T-cell (primary cell): ENCODE measurements at regions of chr9 and their contacts with region 1.

Region 1: GRCh38 chr9:27333241-27334052 is 36.5 kb upstream of the EQTN start:
- DNase-seq: peak in 25 of 35 experiments; percentile 2 to 70 (median 16)
- ATAC-seq: peak in 3 of 4 experiments; percentile 41 to 66 (median 43)
- H3K4me3 ChIP-seq: no peak overlapping the region
- H3K4me3 Mint-ChIP-seq: no peak overlapping the region
- H3K27ac ChIP-seq: no peak overlapping the region
- H3K27ac Mint-ChIP-seq: no peak overlapping the region
- H3K4me1 ChIP-seq: no peaks in the 10 kb centered on the region
- H3K4me1 Mint-ChIP-seq: no peaks in the 10 kb centered on the region
- H3K27me3 ChIP-seq: no peaks in the 10 kb centered on the region
- H3K27me3 Mint-ChIP-seq: no peaks in the 10 kb centered on the region

Region 2: DNA sequence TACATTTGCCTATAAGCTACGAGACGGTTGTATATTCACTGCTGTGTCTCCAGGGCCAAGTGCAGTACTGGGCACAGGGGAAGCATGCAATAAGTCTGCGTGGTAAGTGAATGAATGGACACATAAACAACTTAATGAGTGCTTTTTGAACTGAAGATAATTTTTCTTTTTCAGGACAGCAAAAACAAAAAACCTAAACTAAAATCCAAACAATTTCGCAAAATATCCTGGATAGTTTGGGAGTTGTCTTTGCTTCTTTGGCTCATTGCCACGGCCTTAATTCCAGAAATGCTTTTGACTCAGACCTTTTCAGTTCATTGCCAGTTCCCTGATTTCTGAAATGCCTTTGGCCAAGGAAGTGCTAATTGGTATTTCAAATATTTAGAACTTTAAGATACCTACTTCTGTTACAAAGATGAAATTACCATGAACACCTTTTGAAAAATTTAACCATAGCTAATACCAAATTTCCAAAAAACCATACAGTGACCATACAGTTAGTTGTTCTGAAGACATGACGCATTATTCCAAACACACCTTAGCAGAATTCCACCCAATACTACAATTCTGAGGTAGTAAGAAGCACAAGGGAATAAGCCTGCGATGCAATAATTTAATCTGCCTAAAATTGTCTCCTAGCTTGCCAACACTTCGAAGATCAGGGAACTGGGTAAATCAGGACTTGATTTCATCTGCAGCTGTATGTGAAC is 181.6 kb before region 1 on chr9:
- CTCF ChIA-PET with region 1: no interaction called
- POLR2A ChIA-PET with region 1: no interaction called
- DNase-seq: no peak
- ATAC-seq: no peak
- H3K4me3 ChIP-seq: no peak overlapping the region
- H3K4me3 Mint-ChIP-seq: no peak overlapping the region
- H3K27ac ChIP-seq: no peak overlapping the region
- H3K27ac Mint-ChIP-seq: no peak overlapping the region
- H3K4me1 ChIP-seq: no peaks in the 10 kb centered on the region
- H3K4me1 Mint-ChIP-seq: no peaks in the 10 kb centered on the region
- H3K27me3 ChIP-seq: no peaks in the 10 kb centered on the region
- H3K27me3 Mint-ChIP-seq: peaks cover 0 to 20% of the 10 kb centered on the region in 2 donors

Region 3: DNA sequence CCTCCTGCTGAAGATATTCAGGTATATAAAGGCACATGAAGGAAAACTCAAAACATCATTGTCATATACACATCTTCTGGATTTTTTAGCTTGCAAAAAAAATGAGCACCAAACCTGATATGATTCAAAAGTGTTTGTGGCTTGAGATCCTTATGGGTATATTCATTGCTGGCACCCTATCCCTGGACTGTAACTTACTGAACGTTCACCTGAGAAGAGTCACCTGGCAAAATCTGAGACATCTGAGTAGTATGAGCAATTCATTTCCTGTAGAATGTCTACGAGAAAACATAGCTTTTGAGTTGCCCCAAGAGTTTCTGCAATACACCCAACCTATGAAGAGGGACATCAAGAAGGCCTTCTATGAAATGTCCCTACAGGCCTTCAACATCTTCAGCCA is 190.8 kb after region 1 on chr9 and contains the start of gene IFNK:
- CTCF ChIA-PET with region 1: interaction called, 7 to 33 read pairs
- POLR2A ChIA-PET with region 1: no interaction called
- DNase-seq: no peak
- ATAC-seq: no peak
- H3K4me3 ChIP-seq: no peak within 1 kb of the TSS
- H3K4me3 Mint-ChIP-seq: no peak within 1 kb of the TSS
- H3K27ac ChIP-seq: no peak within 1 kb of the TSS
- H3K27ac Mint-ChIP-seq: no peak within 1 kb of the TSS
- H3K4me1 ChIP-seq: peaks cover 4 to 16% of the 10 kb centered on the region in 2 experiments
- H3K4me1 Mint-ChIP-seq: peaks cover 0 to 8% (median 5%) of the 10 kb centered on the region in 3 donors
- H3K27me3 ChIP-seq: peaks cover 0 to 17% of the 10 kb centered on the region in 2 experiments
- H3K27me3 Mint-ChIP-seq: peaks cover 0 to 3% of the 10 kb centered on the region in 2 donors
- total RNA-seq, gene IFNK: not detected

Region 4: DNA sequence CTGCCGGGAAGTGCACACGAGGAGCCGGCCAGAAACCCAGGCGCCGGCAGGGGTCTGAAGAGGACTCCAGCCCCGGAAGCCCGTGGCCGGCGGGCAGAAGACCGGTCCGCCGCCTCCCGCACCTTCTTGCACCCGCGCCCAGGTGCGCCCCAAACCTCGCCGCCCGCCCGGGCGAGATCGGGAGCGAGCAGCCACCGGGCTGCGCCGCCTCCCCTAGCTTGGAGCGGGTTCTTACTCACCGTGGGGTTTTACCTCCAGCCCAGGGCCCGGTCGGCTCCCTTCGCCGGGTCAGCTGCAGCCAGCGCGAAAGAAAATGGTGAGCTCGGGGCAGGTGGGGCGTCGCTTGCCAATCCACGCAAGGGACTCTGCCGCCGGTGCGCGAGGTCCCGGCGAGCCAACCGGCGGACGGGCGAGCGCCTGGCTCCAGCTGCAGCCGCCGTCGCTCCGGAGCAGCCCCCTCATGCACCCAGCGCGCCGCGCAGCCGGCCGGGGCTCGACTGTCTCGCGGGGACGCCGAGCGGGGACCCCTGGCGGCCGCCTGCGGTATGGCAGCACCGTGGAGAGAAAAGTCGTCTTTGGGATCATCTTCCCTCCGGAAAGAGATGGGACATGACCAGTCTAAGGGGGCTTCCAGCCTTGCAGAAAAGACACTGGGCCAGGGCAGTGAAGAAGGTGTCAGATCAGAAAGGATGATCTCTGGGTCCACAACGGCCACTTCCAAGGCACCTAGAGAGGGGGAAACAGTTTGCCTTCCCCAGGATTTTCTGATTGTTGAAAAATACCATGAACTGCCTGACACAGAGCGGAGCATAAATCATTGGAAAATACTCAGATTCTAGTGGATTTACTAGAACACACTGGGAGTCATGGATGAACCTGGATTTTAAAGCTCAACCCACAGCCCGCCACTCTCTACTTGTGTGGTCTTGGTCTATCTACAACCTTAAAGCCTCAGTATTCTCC is 196.2 kb after region 1 on chr9 and contains the start of gene MOB3B:
- CTCF ChIA-PET with region 1: interaction called, 7 to 33 read pairs
- POLR2A ChIA-PET with region 1: no interaction called
- DNase-seq: peak; percentile 39 to 80 (median 64)
- ATAC-seq: peak; percentile 84 to 92 (median 88)
- H3K4me3 ChIP-seq: peak within 1 kb of the TSS; percentile 58 to 81
- H3K4me3 Mint-ChIP-seq: peak within 1 kb of the TSS; percentile 88 to 89 (median 89)
- H3K27ac ChIP-seq: no peak within 1 kb of the TSS
- H3K27ac Mint-ChIP-seq: no peak within 1 kb of the TSS
- H3K4me1 ChIP-seq: peaks cover 4 to 18% of the 10 kb centered on the region in 2 experiments
- H3K4me1 Mint-ChIP-seq: peaks cover 0 to 12% (median 9%) of the 10 kb centered on the region in 3 donors
- H3K27me3 ChIP-seq: peaks cover 0 to 17% of the 10 kb centered on the region in 2 experiments
- H3K27me3 Mint-ChIP-seq: peaks cover 0 to 3% of the 10 kb centered on the region in 2 donors
- total RNA-seq, gene MOB3B: 0.40 to 0.72 (median 0.56) TPM

Region 5: GRCh38 chr9:27548055-27548741 is 214.8 kb after region 1 on chr9:
- CTCF ChIA-PET with region 1: interaction called, 3 to 14 read pairs
- POLR2A ChIA-PET with region 1: no interaction called
- DNase-seq: peak in 1 of 35 experiments; percentile 8
- ATAC-seq: no peak
- H3K4me3 ChIP-seq: no peak overlapping the region
- H3K4me3 Mint-ChIP-seq: no peak overlapping the region
- H3K27ac ChIP-seq: no peak overlapping the region
- H3K27ac Mint-ChIP-seq: no peak overlapping the region
- H3K4me1 ChIP-seq: no peaks in the 10 kb centered on the region
- H3K4me1 Mint-ChIP-seq: no peaks in the 10 kb centered on the region
- H3K27me3 ChIP-seq: no peaks in the 10 kb centered on the region
- H3K27me3 Mint-ChIP-seq: no peaks in the 10 kb centered on the region

Region 6: GRCh38 chr9:27864644-27865438 is 531.4 kb after region 1 on chr9:
- CTCF ChIA-PET with region 1: no interaction called
- POLR2A ChIA-PET with region 1: no interaction called
- DNase-seq: no peak
- ATAC-seq: no peak
- H3K4me3 ChIP-seq: no peak overlapping the region
- H3K4me3 Mint-ChIP-seq: no peak overlapping the region
- H3K27ac ChIP-seq: no peak overlapping the region
- H3K27ac Mint-ChIP-seq: no peak overlapping the region
- H3K4me1 ChIP-seq: no peaks in the 10 kb centered on the region
- H3K4me1 Mint-ChIP-seq: no peaks in the 10 kb centered on the region
- H3K27me3 ChIP-seq: peaks cover 0 to 4% of the 10 kb centered on the region in 2 experiments
- H3K27me3 Mint-ChIP-seq: peaks cover 4 to 9% of the 10 kb centered on the region in 2 donors